Activated B cell treated with CpG ODN at 0.5 μM for 24 hours (primary cell): ENCODE measurements at regions of chr1 and their contacts with region 1.

Region 1: DNA sequence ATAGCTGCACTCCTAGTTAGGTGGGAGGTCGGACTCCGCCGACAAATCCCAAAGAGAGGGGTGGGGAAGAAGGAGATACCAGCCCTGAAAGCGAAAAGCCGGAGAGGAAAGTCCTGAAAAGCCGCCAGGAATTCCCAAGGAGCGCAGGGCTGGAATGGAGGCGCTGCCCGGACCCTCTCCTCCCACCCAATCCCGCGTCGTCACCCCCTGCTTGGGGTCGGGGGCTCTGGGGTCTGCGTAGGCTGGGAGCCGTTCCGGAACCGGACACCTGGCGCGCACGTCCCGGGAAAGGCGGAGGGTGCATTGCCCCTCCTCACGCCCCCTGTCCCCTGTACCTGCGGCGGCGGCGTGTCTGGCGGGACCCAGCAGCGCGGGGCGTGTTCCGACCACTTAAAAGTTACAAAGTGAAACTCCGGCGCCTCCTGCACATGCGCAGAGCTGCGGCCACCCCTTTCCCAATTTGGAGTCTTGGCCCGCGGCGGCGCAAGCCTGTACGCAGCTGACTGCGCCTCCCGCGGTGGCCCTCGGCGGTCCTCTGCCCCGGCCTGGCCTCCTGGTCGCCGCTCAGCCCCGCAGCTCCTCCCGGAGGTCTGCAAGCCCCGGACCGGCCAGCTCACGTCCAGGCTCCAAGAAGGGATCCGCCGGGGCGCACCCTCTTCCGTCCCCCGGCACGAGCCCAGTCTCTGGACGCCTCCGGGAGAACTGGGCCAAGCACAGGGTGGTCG is at the start of gene TMEM63A:
- DNase-seq: peak; percentile 85
- ATAC-seq: peak; percentile 82
- H3K4me3 Mint-ChIP-seq: peak within 1 kb of the TSS; percentile 87
- H3K27ac Mint-ChIP-seq: peak within 1 kb of the TSS; percentile 84
- H3K4me1 Mint-ChIP-seq: peaks cover 49% of the 10 kb centered on the region
- H3K27me3 Mint-ChIP-seq: no peaks in the 10 kb centered on the region
- CTCF ChIP-seq: no peak
- total RNA-seq, gene TMEM63A: 54.8 and 74.5 TPM in 2 replicates

Region 2: DNA sequence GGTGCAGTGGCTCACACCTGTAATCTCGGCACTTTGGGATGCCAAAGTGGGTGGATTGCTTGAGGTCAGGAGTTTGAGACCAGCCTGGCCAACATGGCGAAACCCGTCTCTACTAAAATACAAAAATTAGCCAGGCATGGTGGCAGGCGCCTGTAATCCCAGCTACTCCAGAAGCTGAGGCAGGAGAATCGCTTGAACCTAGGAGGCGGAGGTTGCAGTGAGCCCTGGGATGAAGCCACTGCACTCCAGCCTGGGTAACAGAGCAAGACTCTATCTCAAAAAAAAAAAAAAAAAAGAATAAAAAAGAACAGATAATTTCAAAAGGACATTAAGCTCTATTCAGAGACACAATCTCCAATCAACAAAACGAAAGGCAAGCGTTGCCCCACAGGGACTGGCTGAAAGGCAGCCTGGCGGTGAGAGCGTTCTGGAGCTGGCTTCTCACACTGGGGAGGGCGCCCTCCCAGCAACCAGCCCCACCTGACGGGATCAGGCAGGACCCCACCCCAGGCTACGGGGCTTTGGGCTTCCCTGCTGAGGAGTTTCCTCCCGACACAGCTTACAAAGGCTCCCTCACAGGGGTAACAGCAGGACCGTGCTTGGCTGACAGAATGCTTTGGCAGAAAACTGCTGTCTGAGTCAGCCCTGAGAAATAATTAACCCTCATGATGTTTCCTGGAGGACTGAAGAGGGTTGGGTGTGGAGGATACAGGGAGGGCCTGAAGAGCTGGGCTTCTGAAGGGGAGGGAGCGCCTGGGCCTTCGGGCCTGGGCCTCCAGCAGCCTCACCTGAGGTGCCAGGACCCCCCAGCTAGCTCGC is 135.6 kb before region 1 on chr1:
- CTCF ChIA-PET with region 1: no interaction called
- POLR2A ChIA-PET with region 1: no interaction called
- intact Hi-C with region 1: no loop called
- DNase-seq: no peak
- ATAC-seq: no peak
- H3K4me3 Mint-ChIP-seq: no peak overlapping the region
- H3K27ac Mint-ChIP-seq: no peak overlapping the region
- H3K4me1 Mint-ChIP-seq: no peaks in the 10 kb centered on the region
- H3K27me3 Mint-ChIP-seq: no peaks in the 10 kb centered on the region
- CTCF ChIP-seq: no peak

Region 3: GRCh38 chr1:225845571-225846259 is 36.4 kb before region 1 on chr1:
- CTCF ChIA-PET with region 1: interaction called, 3 read pairs
- POLR2A ChIA-PET with region 1: interaction called, 37 read pairs
- intact Hi-C with region 1: loop called (anchors 1 kb)
- DNase-seq: no peak
- ATAC-seq: no peak
- H3K4me3 Mint-ChIP-seq: no peak overlapping the region
- H3K27ac Mint-ChIP-seq: peak overlapping the region; percentile 56
- H3K4me1 Mint-ChIP-seq: peaks cover 47% of the 10 kb centered on the region
- H3K27me3 Mint-ChIP-seq: no peaks in the 10 kb centered on the region
- CTCF ChIP-seq: no peak

Region 4: GRCh38 chr1:225866061-225866837 is 15.9 kb before region 1 on chr1:
- CTCF ChIA-PET with region 1: interaction called, 3 read pairs
- POLR2A ChIA-PET with region 1: interaction called, 8 read pairs
- intact Hi-C with region 1: loop called (anchors 1 kb)
- DNase-seq: no peak
- ATAC-seq: peak; percentile 95
- H3K4me3 Mint-ChIP-seq: no peak overlapping the region
- H3K27ac Mint-ChIP-seq: peak overlapping the region; percentile 75
- H3K4me1 Mint-ChIP-seq: peaks cover 18% of the 10 kb centered on the region
- H3K27me3 Mint-ChIP-seq: no peaks in the 10 kb centered on the region
- CTCF ChIP-seq: no peak

Region 5: GRCh38 chr1:225911191-225912130 is 29.3 kb after region 1 on chr1:
- CTCF ChIA-PET with region 1: interaction called, 5 read pairs
- POLR2A ChIA-PET with region 1: interaction called, 15 read pairs
- intact Hi-C with region 1: loop called (anchors 2 kb)
- DNase-seq: peak; percentile 66
- ATAC-seq: peak; percentile 90
- H3K4me3 Mint-ChIP-seq: no peak overlapping the region
- H3K27ac Mint-ChIP-seq: no peak overlapping the region
- H3K4me1 Mint-ChIP-seq: peaks cover 23% of the 10 kb centered on the region
- H3K27me3 Mint-ChIP-seq: no peaks in the 10 kb centered on the region
- CTCF ChIP-seq: peak; percentile 40

Region 6: DNA sequence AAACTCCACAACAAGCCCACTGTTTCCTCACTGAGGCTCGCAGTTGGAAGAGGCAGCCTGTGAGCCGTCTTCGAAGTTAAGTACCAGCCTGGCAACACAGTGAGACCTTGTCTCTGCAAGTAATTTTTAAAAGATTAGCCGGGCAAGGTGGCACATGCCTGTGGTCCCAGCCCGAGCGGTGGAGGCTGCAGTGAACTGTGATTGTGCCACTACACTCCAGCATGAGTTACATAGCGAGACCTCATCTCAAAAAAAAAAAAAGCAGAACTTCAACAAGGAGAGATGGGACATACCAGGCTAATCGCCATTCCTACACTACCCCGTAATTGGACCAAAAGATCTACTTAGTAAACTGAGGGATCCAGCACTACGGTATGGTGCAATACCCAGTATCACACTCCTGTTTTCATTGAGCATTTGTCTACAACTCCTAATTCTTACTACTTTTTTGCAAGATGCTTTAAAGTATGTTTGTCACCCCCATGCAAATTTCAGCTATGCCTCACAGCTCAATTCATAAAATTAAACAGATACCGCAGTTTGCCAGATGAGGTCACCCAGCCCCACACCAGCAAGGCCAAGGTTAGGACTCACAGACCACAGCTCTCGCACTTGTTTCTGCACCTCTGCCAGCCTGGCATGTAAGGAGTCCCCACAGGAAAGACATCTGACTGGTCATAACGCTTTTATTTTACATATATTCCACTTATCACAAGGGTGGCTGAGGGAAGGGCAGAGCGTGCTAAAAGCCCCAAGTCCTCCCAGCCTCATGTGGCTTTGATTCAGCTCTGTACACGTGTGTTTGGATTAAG is 96.0 kb after region 1 on chr1:
- CTCF ChIA-PET with region 1: interaction called, 3 read pairs
- POLR2A ChIA-PET with region 1: interaction called, 5 read pairs
- intact Hi-C with region 1: loop called (anchors 5 kb)
- DNase-seq: no peak
- ATAC-seq: peak; percentile 79
- H3K4me3 Mint-ChIP-seq: peak overlapping the region; percentile 63
- H3K27ac Mint-ChIP-seq: peak overlapping the region; percentile 81
- H3K4me1 Mint-ChIP-seq: peaks cover 33% of the 10 kb centered on the region
- H3K27me3 Mint-ChIP-seq: no peaks in the 10 kb centered on the region
- CTCF ChIP-seq: no peak